ENCODE measurements at regions of chr22 and their contacts with region 1.

Region 1: DNA sequence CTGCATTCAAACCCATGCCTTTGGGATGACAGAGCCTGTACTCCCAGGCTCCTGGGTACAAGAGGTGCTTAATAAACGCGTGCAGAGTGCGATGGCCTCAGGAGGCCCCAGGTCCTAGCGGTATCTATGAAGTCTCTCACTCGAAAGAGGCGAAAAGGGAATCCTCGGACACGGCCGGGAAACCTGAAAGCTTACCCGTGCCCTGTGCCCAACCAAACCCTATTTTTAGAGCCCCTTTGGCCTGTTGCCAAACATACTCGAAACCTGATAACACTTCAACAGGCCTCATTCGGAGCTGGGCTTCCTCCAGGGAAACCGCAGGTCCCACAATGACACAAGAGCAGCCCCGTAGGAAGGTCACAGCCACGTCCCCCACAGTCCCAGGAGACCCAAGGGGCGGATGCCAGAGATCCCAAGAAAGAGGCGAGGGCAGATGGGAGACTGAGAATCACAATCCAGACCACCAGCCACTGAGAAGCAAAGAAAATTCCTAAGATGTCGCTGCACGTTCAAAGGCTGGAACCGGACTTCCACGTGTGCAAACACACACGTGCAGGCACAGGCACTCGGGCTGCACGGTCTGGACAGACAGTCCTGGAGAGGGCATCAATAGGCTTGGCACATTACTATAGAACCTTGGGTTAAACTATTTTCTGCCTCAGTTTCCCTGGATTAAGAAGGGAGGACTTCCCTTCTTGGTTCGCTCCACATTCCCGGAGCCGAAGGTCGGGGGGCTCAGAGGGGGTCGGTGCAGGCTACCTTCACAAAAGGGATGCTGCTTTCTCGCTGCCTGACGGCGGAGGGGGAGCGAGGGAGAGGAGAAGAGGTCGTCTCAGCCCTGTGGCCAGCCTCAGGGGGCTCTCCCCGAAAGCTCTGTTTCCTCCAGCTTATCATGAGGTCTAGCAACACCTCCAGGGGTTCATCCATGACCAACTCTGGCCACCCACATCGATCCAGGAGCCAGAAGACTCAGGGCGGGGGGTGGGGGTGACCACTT is 8.2 kb downstream of the PDGFB start:
- DNase-seq: peak; percentile 79
- H3K4me3 Mint-ChIP-seq: peak overlapping the region; percentile 49
- H3K27ac Mint-ChIP-seq: no peak overlapping the region
- H3K4me1 Mint-ChIP-seq: peaks cover 43% of the 10 kb centered on the region
- H3K27me3 Mint-ChIP-seq: peaks cover 60% of the 10 kb centered on the region

Region 2: DNA sequence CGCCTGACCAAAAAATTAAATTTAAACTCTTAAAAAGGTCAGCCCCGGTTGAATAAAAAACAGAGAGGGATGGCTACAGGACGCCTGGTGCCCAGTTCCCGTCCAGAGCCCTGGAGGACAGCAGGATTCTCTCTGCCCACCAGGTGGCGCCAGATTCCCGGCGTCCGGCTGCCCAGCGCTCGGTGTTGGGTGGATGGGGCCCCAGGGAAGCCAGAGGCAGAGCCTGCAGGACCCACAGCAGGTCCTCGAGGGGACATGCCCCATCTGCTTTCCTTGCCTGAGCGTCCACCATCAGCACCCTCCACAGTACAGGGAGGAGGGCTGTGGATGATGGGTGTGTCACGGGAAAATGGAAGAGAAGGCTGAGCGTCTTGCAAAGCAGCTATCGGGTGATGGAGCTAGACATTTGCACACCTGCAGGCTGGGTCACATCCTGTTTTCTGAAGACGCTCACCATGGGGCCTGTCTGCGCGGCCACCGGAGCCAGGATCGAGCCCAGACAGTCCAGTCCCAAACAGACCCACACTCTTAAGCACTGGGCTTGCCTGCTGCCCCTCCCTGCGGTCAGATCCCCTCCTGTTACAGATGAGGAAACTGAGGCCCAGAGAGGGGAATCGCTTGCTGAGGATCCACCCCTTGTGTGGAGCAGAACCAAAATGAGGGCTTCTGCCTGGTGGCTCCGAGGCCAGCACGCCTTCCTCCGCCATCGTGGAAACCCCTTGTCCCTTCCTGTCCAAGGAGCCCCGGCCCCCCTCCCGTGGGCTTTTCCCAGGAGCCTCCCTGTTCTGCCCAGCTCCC is 65.6 kb before region 1 on chr22:
- intact Hi-C with region 1: loop called (anchors 5 kb)
- DNase-seq: peak; percentile 96
- H3K4me3 Mint-ChIP-seq: peak overlapping the region; percentile 70
- H3K27ac Mint-ChIP-seq: peak overlapping the region; percentile 72
- H3K4me1 Mint-ChIP-seq: peaks cover 34% of the 10 kb centered on the region
- H3K27me3 Mint-ChIP-seq: peaks cover 9% of the 10 kb centered on the region

Region 3: GRCh38 chr22:39220897-39221850 is 15.4 kb before region 1 on chr22:
- intact Hi-C with region 1: no loop called
- DNase-seq: no peak
- H3K4me3 Mint-ChIP-seq: no peak overlapping the region
- H3K27ac Mint-ChIP-seq: no peak overlapping the region
- H3K4me1 Mint-ChIP-seq: peaks cover 11% of the 10 kb centered on the region
- H3K27me3 Mint-ChIP-seq: peaks cover 27% of the 10 kb centered on the region

Region 4: GRCh38 chr22:39266398-39267030 is 29.9 kb after region 1 on chr22:
- intact Hi-C with region 1: loop called (anchors 1 kb)
- DNase-seq: peak; percentile 81
- H3K4me3 Mint-ChIP-seq: peak overlapping the region; percentile 35
- H3K27ac Mint-ChIP-seq: peak overlapping the region; percentile 88
- H3K4me1 Mint-ChIP-seq: peaks cover 21% of the 10 kb centered on the region
- H3K27me3 Mint-ChIP-seq: no peaks in the 10 kb centered on the region

Measured in activated CD4-positive, alpha-beta T cell treated with anti-CD3 and anti-CD28 coated beads, Interleukin-2, amount 10 ng/mL, durations not matched to agents 24 days and 14 days (primary cell).